A549 (cell line): ENCODE measurements at regions of chr2 and their contacts with region 1.

Region 1: GRCh38 chr2:162297925-162298552 is 20.4 kb downstream of the IFIH1 start:
- DNase-seq: peak; percentile 7 to 75
- ATAC-seq: peak; percentile 62 to 85; a peak in 4 of 6 replicates
- H3K4me3 ChIP-seq: no peak overlapping the region
- H3K27ac ChIP-seq: no peak overlapping the region
- H3K4me1 ChIP-seq: no peaks in the 10 kb centered on the region
- CTCF ChIP-seq: peak; percentile 84
- EP300 ChIP-seq: no peak
- POLR2A ChIP-seq: no peak
- RAD21 ChIP-seq: peak; percentile 75 to 83

Region 2: GRCh38 chr2:162153608-162154224 is 144.3 kb before region 1 on chr2:
- CTCF ChIA-PET with region 1: interaction called, 26 read pairs
- POLR2A ChIA-PET with region 1: no interaction called
- DNase-seq: peak; percentile 12 to 53
- ATAC-seq: peak; percentile 93 to 95; a peak in 5 of 6 replicates
- H3K4me3 ChIP-seq: no peak overlapping the region
- H3K27ac ChIP-seq: no peak overlapping the region
- H3K4me1 ChIP-seq: no peaks in the 10 kb centered on the region
- CTCF ChIP-seq: peak; percentile 66
- EP300 ChIP-seq: no peak
- POLR2A ChIP-seq: no peak
- RAD21 ChIP-seq: peak; percentile 52 to 54

Region 3: GRCh38 chr2:162221064-162221463 is 77.0 kb before region 1 on chr2:
- CTCF ChIA-PET with region 1: interaction called, 87 read pairs
- POLR2A ChIA-PET with region 1: no interaction called
- DNase-seq: peak; percentile 35 to 63
- ATAC-seq: peak; percentile 81 to 97
- H3K4me3 ChIP-seq: no peak overlapping the region
- H3K27ac ChIP-seq: no peak overlapping the region
- H3K4me1 ChIP-seq: no peaks in the 10 kb centered on the region
- CTCF ChIP-seq: peak; percentile 73
- EP300 ChIP-seq: no peak
- POLR2A ChIP-seq: no peak
- RAD21 ChIP-seq: peak; percentile 64 to 70